ENCODE measurements at regions of chr3 and their contacts with region 1.

Region 1: DNA sequence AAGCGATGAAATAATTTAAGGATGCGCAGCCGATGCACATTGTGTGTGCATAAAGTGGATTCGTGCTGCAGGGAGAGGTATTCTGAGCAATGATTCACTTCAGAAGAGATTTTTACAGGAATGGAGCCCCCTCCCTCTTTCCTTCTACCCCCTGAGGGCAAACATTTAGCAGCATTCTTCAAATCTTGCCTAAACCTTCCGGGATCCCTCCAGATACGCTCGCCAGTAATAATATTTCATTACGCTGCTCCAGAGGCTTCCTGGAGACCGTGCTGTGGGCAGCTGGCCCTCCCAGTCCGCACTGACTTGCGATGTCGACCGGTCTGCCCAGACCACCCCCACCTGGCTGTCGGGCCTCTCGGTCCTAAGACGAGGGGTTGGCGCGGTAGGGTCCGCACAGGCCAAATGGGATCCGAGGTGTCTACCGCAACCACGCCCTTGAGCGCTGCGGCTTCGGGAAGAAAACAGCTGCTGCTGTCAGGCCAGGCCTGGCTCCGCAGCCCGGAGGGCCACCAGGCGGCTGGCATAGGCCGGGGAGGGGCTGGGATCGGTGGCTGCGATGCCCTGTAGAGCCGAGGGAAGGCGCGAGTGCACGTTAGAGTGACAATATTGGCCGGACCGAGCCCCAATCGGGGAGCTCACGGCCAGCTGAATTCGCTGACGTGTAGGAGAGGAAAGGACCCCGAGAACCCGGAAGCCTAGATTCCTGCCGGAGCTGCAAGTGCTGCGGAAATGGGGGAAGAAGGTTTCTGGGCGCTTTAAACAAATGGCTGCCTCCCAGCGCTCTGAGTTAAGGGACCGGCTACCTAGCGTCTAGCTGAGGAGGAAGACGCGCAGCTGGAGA is 14.3 kb downstream of the ZIC4 start:
- DNase-seq: peak; percentile 57 to 94
- H3K4me3 ChIP-seq: peak overlapping the region; percentile 13
- CTCF ChIP-seq: no peak
- POLR2A ChIP-seq: no peak

Region 2: GRCh38 chr3:147336543-147337278 is 55.3 kb before region 1 on chr3:
- intact Hi-C with region 1: no loop called
- DNase-seq: no peak
- H3K4me3 ChIP-seq: no peak overlapping the region
- CTCF ChIP-seq: no peak
- POLR2A ChIP-seq: no peak

Region 3: GRCh38 chr3:147701195-147701594 is 309.2 kb after region 1 on chr3:
- intact Hi-C with region 1: loop called (anchors 5 kb)
- DNase-seq: no peak
- H3K4me3 ChIP-seq: no peak overlapping the region
- CTCF ChIP-seq: no peak
- POLR2A ChIP-seq: no peak

Measured in lower leg skin (tissue), 4 donors.